Right cardiac atrium (tissue), 5 donors: ENCODE measurements at regions of chr7 and their contacts with region 1.

Region 1: GRCh38 chr7:44218418-44219201 is 17.8 kb downstream of the YKT6 start:
- DNase-seq: peak in 2 of 3 donors; percentile 13 to 42
- ATAC-seq: peak; percentile 15 to 19
- H3K4me3 ChIP-seq: no peak overlapping the region
- H3K27ac ChIP-seq: no peak overlapping the region
- H3K4me1 ChIP-seq: no peaks in the 10 kb centered on the region
- H3K27me3 ChIP-seq: no peaks in the 10 kb centered on the region

Region 2: DNA sequence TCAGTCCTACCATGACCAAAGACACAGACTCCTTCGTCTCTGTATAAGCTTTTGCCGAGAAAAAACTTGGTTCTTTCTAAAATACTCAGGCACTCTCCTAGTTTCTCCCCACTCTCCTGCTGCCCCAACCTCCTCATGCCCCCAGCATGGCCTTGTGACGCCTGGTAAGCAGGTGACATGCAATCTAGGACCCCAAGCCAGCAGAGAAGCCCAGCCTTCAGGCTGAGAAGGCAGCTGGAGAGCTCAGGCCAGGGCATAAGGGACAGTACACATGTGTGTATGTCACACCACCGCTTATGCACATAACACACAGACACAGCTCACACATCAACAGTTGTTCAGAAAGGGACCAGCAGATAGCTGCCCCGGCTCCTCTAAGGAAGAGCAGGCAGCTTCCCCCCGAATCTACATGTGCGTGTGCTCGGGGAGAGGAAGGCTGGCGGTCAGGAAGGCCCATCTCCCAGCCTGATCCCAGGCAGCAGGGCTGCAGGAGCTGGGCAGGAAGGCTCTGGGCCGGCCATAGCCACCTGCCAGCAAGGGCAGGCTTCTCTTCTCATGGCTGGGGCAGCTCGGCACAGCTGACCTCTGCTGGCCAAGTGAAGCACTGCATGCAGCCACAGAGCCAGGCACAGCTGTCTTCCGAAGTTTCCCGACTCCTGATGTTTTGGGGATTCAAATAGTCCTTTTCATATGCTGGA is 346.6 kb after region 1 on chr7:
- intact Hi-C with region 1: loop called in 1 of 4 experiments (anchors 10 kb)
- DNase-seq: peak; percentile 69 to 89 (median 87)
- ATAC-seq: peak; percentile 80 to 83
- H3K4me3 ChIP-seq: no peak overlapping the region
- H3K27ac ChIP-seq: peak overlapping the region; percentile 25
- H3K4me1 ChIP-seq: no peaks in the 10 kb centered on the region
- H3K27me3 ChIP-seq: no peaks in the 10 kb centered on the region